WTC11 (cell line): ENCODE measurements at regions of chr19 and their contacts with region 1.

Region 1: GRCh38 chr19:50556282-50557008 is 11.8 kb downstream of the LRRC4B start:
- DNase-seq: peak; percentile 98
- ATAC-seq: peak; percentile 86
- H3K4me3 Mint-ChIP-seq: peak overlapping the region; percentile 99
- H3K27ac Mint-ChIP-seq: peak overlapping the region; percentile 88; the same call in 1 of the 2 replicates
- H3K4me1 Mint-ChIP-seq: peaks cover 12% of the 10 kb centered on the region
- H3K27me3 Mint-ChIP-seq: peaks cover 68% of the 10 kb centered on the region
- CTCF ChIP-seq: peak; percentile 97

Region 2: DNA sequence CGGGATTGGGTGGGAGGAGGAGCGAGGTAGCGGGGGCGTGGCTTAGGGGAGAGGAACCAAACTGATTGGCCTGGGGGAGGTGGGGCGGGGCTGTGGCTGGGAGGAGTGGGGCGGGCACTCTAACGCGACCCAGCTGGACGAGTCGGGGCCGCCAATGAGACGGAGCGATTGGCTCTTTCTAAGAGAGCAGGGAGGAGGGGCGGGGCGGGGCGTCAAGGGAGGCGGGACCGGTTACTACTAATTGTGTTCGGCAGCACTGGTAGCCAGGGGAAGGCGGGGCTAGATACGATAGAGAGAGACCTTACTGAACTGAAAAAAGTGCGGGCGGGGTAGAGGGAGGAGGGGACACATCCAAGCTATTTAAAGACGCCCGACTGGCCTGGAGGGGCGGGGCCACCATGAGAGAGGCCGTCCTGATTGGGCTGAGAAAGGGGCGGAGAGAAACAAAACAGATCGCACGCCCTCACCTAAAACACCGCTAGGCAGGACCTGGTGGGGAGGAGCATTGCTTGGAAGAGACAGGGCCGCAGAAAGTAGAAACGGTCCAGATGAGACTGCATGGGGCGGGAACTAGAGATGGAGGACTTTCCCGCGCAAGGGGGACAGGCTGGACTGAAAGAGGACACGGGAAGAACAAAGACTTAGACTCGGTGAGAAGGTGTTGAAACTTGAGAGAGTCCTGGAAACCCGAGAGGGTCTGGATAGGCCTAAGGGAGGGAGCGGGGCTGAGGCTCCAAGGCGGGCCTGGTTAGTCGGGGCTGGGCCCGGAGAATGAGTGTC is 227.1 kb before region 1 on chr19 and contains the start of gene KCNC3:
- CTCF ChIA-PET with region 1: interaction called, 23 read pairs
- POLR2A ChIA-PET with region 1: no interaction called
- DNase-seq: peak; percentile 100
- ATAC-seq: peak; percentile 62
- H3K4me3 Mint-ChIP-seq: peak within 1 kb of the TSS; percentile 85
- H3K27ac Mint-ChIP-seq: peak within 1 kb of the TSS; percentile 98
- H3K4me1 Mint-ChIP-seq: peaks cover 49% of the 10 kb centered on the region
- H3K27me3 Mint-ChIP-seq: peaks cover 38% of the 10 kb centered on the region
- CTCF ChIP-seq: no peak
- total RNA-seq, gene KCNC3: 8.5 to 10.1 TPM (median 10.0 TPM) in 3 replicates

Region 3: DNA sequence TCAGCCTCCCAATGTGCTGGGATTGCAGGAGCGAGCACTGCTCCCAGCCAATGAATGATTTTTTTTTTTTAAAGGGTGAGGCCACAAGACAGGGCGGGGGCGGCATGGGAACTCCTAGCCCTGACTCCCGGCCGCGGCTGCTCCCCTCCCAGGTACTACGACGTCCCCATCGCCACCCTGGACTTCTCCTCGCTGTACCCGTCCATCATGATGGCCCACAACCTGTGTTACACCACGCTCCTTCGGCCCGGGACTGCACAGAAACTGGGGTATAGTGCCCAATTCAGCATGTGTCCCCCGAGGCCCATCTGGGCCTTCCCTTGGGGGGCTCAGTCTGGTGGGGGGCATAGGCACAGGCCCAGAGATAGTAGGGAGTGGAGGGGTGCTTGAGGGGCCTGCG is 147.8 kb before region 1 on chr19:
- CTCF ChIA-PET with region 1: no interaction called
- POLR2A ChIA-PET with region 1: no interaction called
- DNase-seq: no peak
- ATAC-seq: no peak
- H3K4me3 Mint-ChIP-seq: no peak overlapping the region
- H3K27ac Mint-ChIP-seq: no peak overlapping the region
- H3K4me1 Mint-ChIP-seq: no peaks in the 10 kb centered on the region
- H3K27me3 Mint-ChIP-seq: no peaks in the 10 kb centered on the region; the same call in 1 of the 2 replicates
- CTCF ChIP-seq: no peak

Region 4: DNA sequence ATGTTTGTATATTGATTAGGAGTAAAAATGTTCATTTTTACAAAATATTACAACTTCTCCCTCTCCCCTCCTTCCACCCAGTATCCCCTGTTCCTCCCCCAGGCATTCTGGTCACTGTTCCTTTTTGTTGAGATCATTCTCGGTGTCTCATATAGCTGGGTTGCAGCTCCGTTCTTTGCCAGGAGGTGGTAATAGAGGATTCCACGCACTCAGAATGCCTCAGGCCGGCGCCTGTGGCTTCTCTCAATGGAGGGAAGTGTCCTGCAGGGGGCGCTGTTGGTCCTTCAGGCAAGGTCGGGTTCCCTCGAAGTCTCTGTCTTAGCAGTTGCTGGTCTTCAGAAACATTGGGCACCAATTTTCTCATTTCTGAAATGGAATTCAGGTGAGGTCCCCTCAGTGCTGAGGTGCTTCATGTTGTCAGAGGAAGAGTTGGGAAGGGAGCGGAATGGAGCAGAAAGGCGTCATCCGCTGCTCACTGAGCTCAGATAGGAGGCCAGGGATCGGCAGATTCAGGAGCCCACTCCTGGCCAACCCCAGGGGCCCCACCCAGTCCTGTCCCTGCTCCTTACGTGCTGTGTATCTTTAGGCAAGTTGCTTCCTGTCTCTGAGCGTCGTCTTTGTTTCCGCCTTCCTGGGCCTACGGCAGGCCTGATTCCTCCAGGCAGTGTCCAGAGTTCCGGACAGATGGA is 69.5 kb before region 1 on chr19:
- CTCF ChIA-PET with region 1: interaction called, 30 read pairs
- POLR2A ChIA-PET with region 1: no interaction called
- DNase-seq: peak; percentile 93
- ATAC-seq: peak; percentile 60
- H3K4me3 Mint-ChIP-seq: no peak overlapping the region
- H3K27ac Mint-ChIP-seq: no peak overlapping the region
- H3K4me1 Mint-ChIP-seq: peaks cover 35% of the 10 kb centered on the region
- H3K27me3 Mint-ChIP-seq: peaks cover 71% of the 10 kb centered on the region
- CTCF ChIP-seq: peak; percentile 93

Region 5: GRCh38 chr19:50531118-50531612 is 25.3 kb before region 1 on chr19:
- CTCF ChIA-PET with region 1: interaction called, 200 read pairs
- POLR2A ChIA-PET with region 1: interaction called, 3 read pairs
- DNase-seq: no peak
- ATAC-seq: no peak
- H3K4me3 Mint-ChIP-seq: no peak overlapping the region
- H3K27ac Mint-ChIP-seq: no peak overlapping the region
- H3K4me1 Mint-ChIP-seq: 0 out of 2 replicates have a peak, but pooled peaks cover 2% of the 10 kb centered on the region
- H3K27me3 Mint-ChIP-seq: peaks cover 27% of the 10 kb centered on the region
- CTCF ChIP-seq: no peak

Region 6: DNA sequence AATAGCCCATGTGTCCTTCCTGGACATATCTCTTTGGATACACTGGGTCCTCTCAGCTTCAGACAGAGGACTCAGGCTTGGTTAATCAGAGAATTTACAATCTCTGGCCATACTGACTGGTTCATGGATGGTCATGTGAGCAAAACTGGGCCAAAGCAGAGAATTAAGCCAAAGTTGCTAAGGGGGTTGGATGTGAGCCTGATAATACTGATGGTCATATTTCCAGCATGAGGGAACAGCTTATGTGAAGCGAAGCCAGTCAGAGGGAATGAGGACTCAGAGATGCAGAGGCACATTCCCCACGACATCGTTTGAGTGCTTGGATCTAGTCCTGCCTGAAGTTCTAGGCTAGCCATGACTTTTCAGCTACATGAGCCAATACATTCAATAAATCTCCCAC is 33.7 kb after region 1 on chr19:
- CTCF ChIA-PET with region 1: interaction called, 17 read pairs
- POLR2A ChIA-PET with region 1: no interaction called
- DNase-seq: no peak
- ATAC-seq: no peak
- H3K4me3 Mint-ChIP-seq: no peak overlapping the region
- H3K27ac Mint-ChIP-seq: no peak overlapping the region
- H3K4me1 Mint-ChIP-seq: peaks cover 11% of the 10 kb centered on the region
- H3K27me3 Mint-ChIP-seq: peaks cover 35% of the 10 kb centered on the region
- CTCF ChIP-seq: no peak

Region 7: GRCh38 chr19:50663482-50663790 is 107.0 kb after region 1 on chr19:
- CTCF ChIA-PET with region 1: interaction called, 13 read pairs
- POLR2A ChIA-PET with region 1: no interaction called
- DNase-seq: no peak
- ATAC-seq: no peak
- H3K4me3 Mint-ChIP-seq: no peak overlapping the region
- H3K27ac Mint-ChIP-seq: no peak overlapping the region
- H3K4me1 Mint-ChIP-seq: peaks cover 16% of the 10 kb centered on the region
- H3K27me3 Mint-ChIP-seq: peaks cover 60% of the 10 kb centered on the region
- CTCF ChIP-seq: no peak

Region 8: DNA sequence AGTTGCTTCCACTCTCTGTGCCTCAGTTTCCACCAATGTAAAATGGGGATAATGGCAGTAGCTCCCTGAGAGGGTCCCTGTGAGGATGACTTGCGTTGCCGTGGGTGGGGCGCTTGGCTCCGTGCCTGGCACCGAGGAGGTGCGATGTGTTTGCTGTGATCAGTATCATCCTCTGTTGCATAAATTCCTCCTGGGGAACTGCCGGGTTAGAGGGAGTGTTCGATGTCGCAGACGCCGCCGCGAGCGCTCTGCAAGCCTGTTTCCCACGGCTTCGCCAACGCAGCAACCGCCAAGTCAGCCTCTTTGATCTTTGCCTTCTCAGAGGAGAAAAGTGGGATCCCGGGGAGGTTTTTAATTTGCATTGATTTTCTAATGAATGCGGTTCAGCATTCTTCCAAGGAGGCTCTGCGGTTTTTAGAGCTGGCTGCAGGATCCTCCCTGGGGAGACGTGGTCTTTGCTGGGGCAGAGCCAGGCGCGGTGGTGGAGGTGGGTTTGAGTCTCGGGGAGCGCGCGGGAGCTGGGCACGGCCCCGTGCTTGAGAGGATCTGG is 221.4 kb after region 1 on chr19:
- CTCF ChIA-PET with region 1: interaction called, 11 read pairs
- POLR2A ChIA-PET with region 1: no interaction called
- DNase-seq: peak; percentile 71
- ATAC-seq: peak; percentile 54
- H3K4me3 Mint-ChIP-seq: peak overlapping the region; percentile 59
- H3K27ac Mint-ChIP-seq: 0 out of 2 replicates have a peak overlapping the region, but pooled peaks have one; percentile 51
- H3K4me1 Mint-ChIP-seq: peaks cover 24% of the 10 kb centered on the region
- H3K27me3 Mint-ChIP-seq: peaks cover 95% of the 10 kb centered on the region
- CTCF ChIP-seq: no peak